Naive thymus-derived CD4-positive, alpha-beta T cell (primary cell): ENCODE measurements at regions of chr1 and their contacts with region 1.

Region 1: DNA sequence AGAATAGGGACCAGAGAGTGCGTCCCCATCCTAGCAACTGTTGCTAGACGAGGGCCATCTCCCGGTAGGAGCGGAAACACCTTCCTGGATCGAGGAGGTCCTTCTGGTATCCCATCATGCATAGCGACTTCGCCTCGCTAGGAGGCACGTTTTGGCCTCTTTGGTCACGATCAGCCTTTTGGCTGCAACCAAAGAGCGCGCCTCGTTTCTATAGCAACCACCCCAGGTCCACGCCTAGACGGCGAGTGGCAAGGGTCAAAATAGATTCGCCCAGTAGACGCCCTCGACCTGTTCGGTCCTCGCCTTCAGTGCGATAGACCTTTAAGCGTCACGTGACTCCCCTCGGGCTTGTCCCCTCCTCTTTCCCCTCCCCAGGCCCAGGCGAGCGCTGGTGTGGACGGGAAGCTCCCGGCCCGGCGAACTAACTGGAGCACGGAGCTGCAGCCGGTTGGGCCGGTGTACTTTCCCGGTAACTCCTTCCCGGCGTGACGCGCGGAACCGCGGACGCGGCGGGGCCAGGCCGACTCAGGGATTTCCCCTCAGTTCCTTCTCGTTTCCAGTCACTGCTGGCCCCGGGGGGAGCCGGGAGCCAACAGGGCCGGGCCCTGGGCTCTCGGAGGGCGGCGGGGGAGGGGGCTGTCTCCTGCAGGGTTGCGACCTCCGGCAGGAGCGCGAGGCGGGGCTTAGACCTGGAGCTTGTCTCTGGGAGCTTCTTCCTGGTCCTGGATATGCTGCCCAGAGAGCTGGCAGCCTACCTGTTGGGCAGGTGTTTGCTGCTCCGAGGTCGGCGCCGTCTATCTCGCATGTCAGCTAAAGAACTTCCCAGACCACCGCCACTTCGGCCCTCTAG is at the start of gene DNAJC16:
- DNase-seq: peak; percentile 75 to 98 (median 96)
- ATAC-seq: peak; percentile 50
- H3K4me3 ChIP-seq: peak within 1 kb of the TSS; percentile 78
- H3K4me3 Mint-ChIP-seq: peak within 1 kb of the TSS; percentile 82 to 100 (median 91)
- H3K27ac ChIP-seq: peak within 1 kb of the TSS; percentile 100
- H3K27ac Mint-ChIP-seq: peak within 1 kb of the TSS; percentile 90 to 100 (median 100)
- H3K4me1 ChIP-seq: peaks cover 21 to 28% of the 10 kb centered on the region in 2 donors
- H3K4me1 Mint-ChIP-seq: peaks cover 33 to 71% (median 60%) of the 10 kb centered on the region in 7 donors
- H3K27me3 ChIP-seq: no peaks in the 10 kb centered on the region
- H3K27me3 Mint-ChIP-seq: no peaks in the 10 kb centered on the region
- total RNA-seq, gene DNAJC16: 17.8 to 29.4 (median 25.0) TPM

Region 2: GRCh38 chr1:15409388-15410222 is 117.1 kb before region 1 on chr1 and contains the start of gene EFHD2:
- CTCF ChIA-PET with region 1: no interaction called
- POLR2A ChIA-PET with region 1: no interaction called
- intact Hi-C with region 1: loop called (anchors 1 kb)
- DNase-seq: peak; percentile 71 to 97 (median 82)
- ATAC-seq: peak; percentile 82
- H3K4me3 ChIP-seq: peak within 1 kb of the TSS; percentile 77
- H3K4me3 Mint-ChIP-seq: peak within 1 kb of the TSS; percentile 87 to 99 (median 92)
- H3K27ac ChIP-seq: peak within 1 kb of the TSS; percentile 94
- H3K27ac Mint-ChIP-seq: peak within 1 kb of the TSS; percentile 66 to 97 (median 95)
- H3K4me1 ChIP-seq: peaks cover 20 to 69% of the 10 kb centered on the region in 2 donors
- H3K4me1 Mint-ChIP-seq: peaks cover 6 to 52% (median 33%) of the 10 kb centered on the region in 7 donors
- H3K27me3 ChIP-seq: no peaks in the 10 kb centered on the region
- H3K27me3 Mint-ChIP-seq: peaks cover 0 to 33% (median 0%) of the 10 kb centered on the region in 5 donors
- total RNA-seq, gene EFHD2: 29.9 to 258 (median 82.6) TPM

Region 3: DNA sequence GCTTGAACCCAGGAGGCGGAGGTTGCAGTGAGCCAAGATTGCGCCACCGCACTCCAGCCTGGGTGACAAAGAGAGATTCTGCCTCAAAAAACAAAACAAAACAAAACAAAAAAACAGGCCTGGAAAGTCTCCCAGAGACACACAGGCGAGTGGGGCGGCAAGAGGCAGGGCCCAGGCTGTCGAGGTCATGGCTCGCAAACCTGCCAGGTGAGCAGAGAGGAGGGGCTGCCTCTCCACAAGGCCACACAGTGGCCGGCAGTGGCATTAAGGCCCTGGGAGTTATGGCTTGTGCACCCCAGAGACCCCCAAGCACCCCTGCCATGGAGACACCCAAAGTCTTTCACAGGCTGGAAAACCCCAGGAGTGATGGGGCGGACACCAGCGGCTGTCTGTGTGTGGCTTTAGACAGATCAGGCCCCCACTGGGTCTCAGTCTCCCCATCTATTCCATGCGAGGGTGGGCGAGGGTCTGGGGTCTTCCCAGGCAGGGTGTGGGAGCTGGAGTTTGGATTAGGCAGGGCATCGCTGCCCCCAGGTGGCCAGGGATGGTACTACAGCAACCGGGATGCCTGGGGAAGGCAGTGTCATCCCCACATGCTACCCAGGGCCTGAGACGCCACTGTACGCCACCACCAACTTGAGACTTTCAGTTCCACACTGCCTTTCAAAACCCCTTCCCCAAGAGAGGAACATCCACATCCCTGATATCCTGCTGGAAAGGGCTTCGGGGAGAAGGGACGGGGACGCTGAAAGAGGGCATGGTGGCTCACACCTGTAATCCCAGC is 95.7 kb before region 1 on chr1:
- CTCF ChIA-PET with region 1: no interaction called
- POLR2A ChIA-PET with region 1: no interaction called
- intact Hi-C with region 1: no loop called
- DNase-seq: peak; percentile 48 to 85 (median 68)
- ATAC-seq: peak; percentile 72
- H3K4me3 ChIP-seq: no peak overlapping the region
- H3K4me3 Mint-ChIP-seq: no peak overlapping the region
- H3K27ac ChIP-seq: no peak overlapping the region
- H3K27ac Mint-ChIP-seq: peak overlapping the region in 1 of 9 donors; percentile 77
- H3K4me1 ChIP-seq: no peaks in the 10 kb centered on the region
- H3K4me1 Mint-ChIP-seq: peaks cover 0 to 8% (median 0%) of the 10 kb centered on the region in 7 donors
- H3K27me3 ChIP-seq: no peaks in the 10 kb centered on the region
- H3K27me3 Mint-ChIP-seq: no peaks in the 10 kb centered on the region

Region 4: GRCh38 chr1:15617175-15617880 is 90.6 kb after region 1 on chr1 and contains the start of gene DDI2:
- CTCF ChIA-PET with region 1: interaction called, 3 read pairs
- POLR2A ChIA-PET with region 1: interaction called, 5 read pairs
- intact Hi-C with region 1: loop called (anchors 1 kb)
- DNase-seq: peak; percentile 86 to 97 (median 88)
- ATAC-seq: peak; percentile 94
- H3K4me3 ChIP-seq: peak within 1 kb of the TSS; percentile 96
- H3K4me3 Mint-ChIP-seq: peak within 1 kb of the TSS; percentile 83 to 96 (median 94)
- H3K27ac ChIP-seq: peak within 1 kb of the TSS; percentile 88
- H3K27ac Mint-ChIP-seq: peak within 1 kb of the TSS; percentile 84 to 96 (median 92)
- H3K4me1 ChIP-seq: peaks cover 20 to 30% of the 10 kb centered on the region in 2 donors
- H3K4me1 Mint-ChIP-seq: peaks cover 29 to 51% (median 43%) of the 10 kb centered on the region in 7 donors
- H3K27me3 ChIP-seq: no peaks in the 10 kb centered on the region
- H3K27me3 Mint-ChIP-seq: no peaks in the 10 kb centered on the region
- total RNA-seq, gene DDI2: 24.5 to 46.8 (median 37.0) TPM

Region 5: DNA sequence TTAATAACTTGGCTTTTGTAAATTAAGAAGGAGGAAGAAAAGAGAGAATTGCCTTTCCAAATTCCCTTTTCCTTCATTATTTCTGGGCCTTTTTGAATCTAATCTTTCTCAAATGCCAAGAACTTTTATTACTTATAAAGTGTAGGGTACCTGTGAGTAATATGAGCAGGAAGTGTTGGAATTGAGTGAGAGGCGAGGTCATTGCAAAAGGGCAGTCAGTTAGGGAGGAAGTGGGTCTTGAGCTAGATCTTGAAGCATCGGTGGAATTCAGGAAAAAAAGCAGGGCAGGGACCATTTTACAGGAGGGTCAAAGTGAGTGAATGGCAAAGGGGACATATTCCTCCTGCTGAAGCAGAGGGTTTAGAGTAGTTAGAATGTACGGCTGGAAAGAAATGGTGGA is 114.0 kb after region 1 on chr1:
- CTCF ChIA-PET with region 1: no interaction called
- POLR2A ChIA-PET with region 1: no interaction called
- intact Hi-C with region 1: no loop called
- DNase-seq: no peak
- ATAC-seq: no peak
- H3K4me3 ChIP-seq: no peak overlapping the region
- H3K4me3 Mint-ChIP-seq: peak overlapping the region in 1 of 10 donors; percentile 8
- H3K27ac ChIP-seq: no peak overlapping the region
- H3K27ac Mint-ChIP-seq: peak overlapping the region in 3 of 9 donors; percentile 45 to 81 (median 71)
- H3K4me1 ChIP-seq: no peaks in the 10 kb centered on the region
- H3K4me1 Mint-ChIP-seq: peaks cover 0 to 7% (median 4%) of the 10 kb centered on the region in 7 donors
- H3K27me3 ChIP-seq: no peaks in the 10 kb centered on the region
- H3K27me3 Mint-ChIP-seq: no peaks in the 10 kb centered on the region

Region 6: GRCh38 chr1:15975805-15976680 is 449.3 kb after region 1 on chr1 and contains the start of gene ZBTB17:
- CTCF ChIA-PET with region 1: no interaction called
- POLR2A ChIA-PET with region 1: no interaction called
- intact Hi-C with region 1: loop called in 1 of 2 experiments (anchors 5 kb)
- DNase-seq: peak; percentile 90 to 95 (median 94)
- ATAC-seq: peak; percentile 96
- H3K4me3 ChIP-seq: peak within 1 kb of the TSS; percentile 76
- H3K4me3 Mint-ChIP-seq: peak within 1 kb of the TSS; percentile 82 to 94 (median 90)
- H3K27ac ChIP-seq: peak within 1 kb of the TSS; percentile 83
- H3K27ac Mint-ChIP-seq: peak within 1 kb of the TSS; percentile 82 to 95 (median 92)
- H3K4me1 ChIP-seq: peaks cover 12 to 17% of the 10 kb centered on the region in 2 donors
- H3K4me1 Mint-ChIP-seq: peaks cover 21 to 46% (median 38%) of the 10 kb centered on the region in 7 donors
- H3K27me3 ChIP-seq: no peaks in the 10 kb centered on the region
- H3K27me3 Mint-ChIP-seq: no peaks in the 10 kb centered on the region
- total RNA-seq, gene ZBTB17: 47.3 to 85.1 (median 65.0) TPM

Region 7: DNA sequence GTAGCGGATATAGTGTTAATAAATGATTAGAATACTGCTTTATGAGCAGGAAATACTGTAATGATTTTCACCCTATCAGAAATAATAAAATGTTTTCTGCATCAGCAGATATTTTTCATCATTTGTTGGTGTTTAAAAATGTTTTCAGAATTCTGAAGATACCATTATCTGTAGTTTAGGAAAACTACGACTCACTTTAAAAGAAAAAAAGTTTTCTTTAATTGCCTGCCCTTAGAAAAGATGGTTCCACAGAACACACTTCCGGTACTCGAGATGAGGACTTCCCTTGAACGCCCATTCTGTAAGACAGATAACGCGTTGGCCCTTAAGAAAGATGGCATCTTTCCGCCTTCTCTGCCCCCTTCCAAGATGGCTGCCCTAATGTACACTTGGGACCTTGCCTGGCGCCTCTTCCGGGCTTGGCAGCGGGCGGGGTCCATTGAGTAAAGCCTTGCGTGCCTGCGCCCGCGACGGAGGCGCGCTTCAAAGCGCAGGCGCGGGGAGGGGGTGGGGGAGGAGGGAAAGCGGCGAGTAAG is 840.1 kb after region 1 on chr1 and contains the start of gene SZRD1:
- CTCF ChIA-PET with region 1: no interaction called
- POLR2A ChIA-PET with region 1: no interaction called
- intact Hi-C with region 1: loop called (anchors 1 kb)
- DNase-seq: peak; percentile 81 to 98 (median 96)
- ATAC-seq: peak; percentile 94
- H3K4me3 ChIP-seq: peak within 1 kb of the TSS; percentile 98
- H3K4me3 Mint-ChIP-seq: peak within 1 kb of the TSS; percentile 93 to 99 (median 96)
- H3K27ac ChIP-seq: peak within 1 kb of the TSS; percentile 99
- H3K27ac Mint-ChIP-seq: peak within 1 kb of the TSS; percentile 90 to 99 (median 97)
- H3K4me1 ChIP-seq: peaks cover 19 to 26% of the 10 kb centered on the region in 2 donors
- H3K4me1 Mint-ChIP-seq: peaks cover 15 to 43% (median 38%) of the 10 kb centered on the region in 7 donors
- H3K27me3 ChIP-seq: no peaks in the 10 kb centered on the region
- H3K27me3 Mint-ChIP-seq: no peaks in the 10 kb centered on the region
- total RNA-seq, gene SZRD1: 81.6 to 163 (median 125) TPM

Region 8: GRCh38 chr1:17011439-17012307 is 1485.0 kb after region 1 on chr1 and contains the start of gene ATP13A2:
- CTCF ChIA-PET with region 1: no interaction called
- POLR2A ChIA-PET with region 1: no interaction called
- intact Hi-C with region 1: loop called in 1 of 2 experiments (anchors 5 kb)
- DNase-seq: peak; percentile 76 to 87 (median 82)
- ATAC-seq: peak; percentile 99
- H3K4me3 ChIP-seq: peak within 1 kb of the TSS; percentile 72
- H3K4me3 Mint-ChIP-seq: peak within 1 kb of the TSS; percentile 81 to 91 (median 86)
- H3K27ac ChIP-seq: peak within 1 kb of the TSS; percentile 72
- H3K27ac Mint-ChIP-seq: peak within 1 kb of the TSS; percentile 23 to 83 (median 75)
- H3K4me1 ChIP-seq: peaks cover 15 to 16% of the 10 kb centered on the region in 2 donors
- H3K4me1 Mint-ChIP-seq: peaks cover 9 to 27% (median 17%) of the 10 kb centered on the region in 7 donors
- H3K27me3 ChIP-seq: no peaks in the 10 kb centered on the region
- H3K27me3 Mint-ChIP-seq: peaks cover 0 to 2% (median 0%) of the 10 kb centered on the region in 5 donors
- total RNA-seq, gene ATP13A2: 32.9 to 57.4 (median 42.1) TPM